Cardiac septum (tissue), 1 donor: ENCODE measurements at regions of chr20 and their contacts with region 1.

Region 1: GRCh38 chr20:51541189-51542032 is 1.1 kb downstream of the NFATC2 start:
- DNase-seq: peak; percentile 90

Region 2: GRCh38 chr20:51447097-51447771 is 94.2 kb before region 1 on chr20:
- intact Hi-C with region 1: loop called (anchors 5 kb)
- DNase-seq: no peak

Region 3: DNA sequence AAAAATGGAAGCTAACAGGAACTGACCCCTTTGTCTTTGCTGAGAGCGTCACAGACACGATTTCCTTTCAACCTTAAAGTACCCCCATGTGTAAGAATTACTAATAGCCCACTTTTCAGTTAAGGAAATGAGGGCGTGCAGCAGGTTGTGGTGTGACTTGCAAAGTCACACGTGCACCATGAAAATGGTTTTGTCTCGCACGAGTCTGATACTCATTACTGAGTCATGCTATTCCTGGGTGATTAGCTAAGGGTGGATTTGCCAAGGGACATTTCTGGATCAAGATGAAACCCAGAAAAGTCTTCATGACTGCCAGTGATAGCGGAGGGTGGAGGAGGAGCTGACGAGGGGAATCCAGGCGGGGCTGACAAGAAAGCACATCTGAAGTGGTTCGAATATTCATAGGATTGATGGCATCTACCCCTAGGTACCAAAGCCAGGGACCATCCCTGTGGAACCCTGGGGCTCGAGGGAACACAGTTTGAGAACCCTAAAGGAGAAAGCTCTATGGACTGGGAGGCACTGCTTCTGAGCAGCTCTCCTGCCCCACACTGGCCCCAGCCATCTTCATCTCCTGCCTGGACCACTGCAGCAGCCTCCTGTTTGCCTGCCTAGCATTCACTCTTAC is 13.2 kb after region 1 on chr20:
- intact Hi-C with region 1: no loop called
- DNase-seq: no peak